ENCODE measurements at regions of chr7 and their contacts with region 1.

Region 1: DNA sequence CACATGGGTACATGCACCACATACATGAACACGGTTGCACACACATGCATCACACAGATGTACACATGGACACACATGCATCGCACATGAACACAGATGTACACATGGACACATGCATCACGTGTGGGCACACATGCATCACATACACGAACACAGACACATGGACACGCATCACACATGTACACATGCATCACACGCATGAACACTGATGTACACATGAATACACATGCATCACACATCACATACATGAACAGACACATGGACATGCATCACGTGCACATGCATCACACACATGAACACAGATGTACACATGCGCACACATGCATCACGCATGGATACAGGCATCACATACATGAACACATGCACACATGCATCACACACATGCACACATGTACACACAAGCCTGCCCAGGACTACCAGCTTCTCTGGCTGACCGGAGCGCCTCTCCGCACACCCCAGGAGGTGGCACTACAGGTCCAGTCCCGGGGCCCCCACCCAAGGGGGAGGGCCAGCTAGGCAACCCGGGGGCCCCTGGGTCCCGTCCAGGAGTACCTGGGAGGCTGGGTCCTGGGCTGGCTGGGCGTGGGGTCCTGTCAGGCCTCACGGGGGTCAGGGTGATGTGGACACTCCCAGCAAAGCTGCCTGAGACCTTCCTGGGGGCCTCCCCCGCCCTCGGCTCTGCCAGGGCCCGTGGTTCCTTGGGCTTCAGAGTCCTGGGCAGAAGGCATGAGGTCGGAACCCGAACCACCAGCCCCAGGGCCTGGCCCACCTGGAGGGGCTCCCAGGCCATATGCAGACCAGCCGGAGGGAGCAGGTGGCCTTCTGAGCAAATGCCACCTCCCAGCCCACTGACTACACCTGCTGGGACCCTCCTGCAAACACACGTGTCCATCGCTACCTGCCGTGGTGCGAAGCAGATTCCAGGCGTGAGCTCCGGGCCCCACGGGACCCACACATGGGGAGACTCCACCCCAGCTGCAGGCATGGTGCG is 19.6 kb downstream of the MICALL2 start:
- DNase-seq: no peak
- H3K4me3 ChIP-seq: no peak overlapping the region
- H3K27ac ChIP-seq: no peak overlapping the region
- H3K4me1 ChIP-seq: no peaks in the 10 kb centered on the region
- H3K27me3 ChIP-seq: no peaks in the 10 kb centered on the region
- CTCF ChIP-seq: no peak
- POLR2A ChIP-seq: no peak

Region 2: GRCh38 chr7:1234881-1235500 is 204.7 kb before region 1 on chr7:
- intact Hi-C with region 1: loop called (anchors 5 kb)
- DNase-seq: no peak
- H3K4me3 ChIP-seq: no peak overlapping the region
- H3K27ac ChIP-seq: no peak overlapping the region
- H3K4me1 ChIP-seq: no peaks in the 10 kb centered on the region
- H3K27me3 ChIP-seq: peaks cover 25 to 92% of the 10 kb centered on the region in 2 donors
- CTCF ChIP-seq: no peak
- POLR2A ChIP-seq: no peak

Region 3: DNA sequence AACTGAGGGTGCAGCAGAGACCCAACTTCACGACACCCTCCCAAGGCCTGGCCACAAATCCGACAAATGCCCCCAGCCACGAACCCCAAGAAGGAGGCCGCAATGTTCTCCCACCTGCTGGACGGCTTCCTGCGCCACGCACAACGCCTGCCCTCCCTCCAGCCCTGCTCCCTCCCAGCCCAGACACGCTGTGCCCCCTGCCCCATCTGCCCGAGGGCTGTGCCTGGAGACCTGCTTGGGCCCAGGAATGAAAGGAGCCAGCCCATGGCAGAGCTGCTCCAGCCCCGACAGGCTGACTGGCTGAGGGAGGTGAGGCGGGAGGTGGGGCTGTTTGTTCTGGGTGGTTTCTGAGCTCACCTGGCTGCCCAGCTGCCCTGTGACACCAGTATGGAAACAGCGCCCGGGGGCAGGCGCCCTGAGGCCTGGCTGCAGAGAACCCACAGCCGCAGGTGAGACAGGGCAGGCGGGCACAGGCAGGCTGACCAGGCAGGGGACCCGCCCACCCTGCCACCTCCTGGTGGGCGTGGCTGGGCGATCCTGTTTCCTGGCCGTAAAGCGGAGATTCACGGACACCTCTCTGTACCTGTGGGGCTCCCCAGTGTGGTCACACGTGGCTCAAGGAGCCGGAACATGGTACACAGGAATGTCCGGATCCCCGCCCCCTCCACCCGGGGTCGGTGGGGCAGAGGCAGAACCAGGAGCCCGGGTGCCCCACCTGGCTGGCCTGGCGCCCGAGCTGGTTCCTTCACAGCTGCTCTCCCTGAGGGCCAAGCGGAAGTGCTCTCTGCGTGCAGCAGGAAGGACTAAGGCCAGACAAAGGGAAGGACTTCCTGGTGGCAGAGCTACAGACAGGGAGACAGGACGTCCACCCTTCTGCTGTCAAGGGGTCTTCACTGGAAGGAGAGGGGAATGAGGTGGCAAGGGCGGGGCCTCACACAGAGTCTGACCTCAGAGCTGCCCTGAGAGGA is 15.6 kb after region 1 on chr7:
- intact Hi-C with region 1: no loop called
- DNase-seq: peak; percentile 86 to 88
- H3K4me3 ChIP-seq: peak overlapping the region in 2 of 3 donors; percentile 47 to 65
- H3K27ac ChIP-seq: peak overlapping the region; percentile 74 to 84
- H3K4me1 ChIP-seq: peaks cover 5 to 9% of the 10 kb centered on the region in 2 donors
- H3K27me3 ChIP-seq: no peaks in the 10 kb centered on the region
- CTCF ChIP-seq: no peak
- POLR2A ChIP-seq: no peak

Region 4: DNA sequence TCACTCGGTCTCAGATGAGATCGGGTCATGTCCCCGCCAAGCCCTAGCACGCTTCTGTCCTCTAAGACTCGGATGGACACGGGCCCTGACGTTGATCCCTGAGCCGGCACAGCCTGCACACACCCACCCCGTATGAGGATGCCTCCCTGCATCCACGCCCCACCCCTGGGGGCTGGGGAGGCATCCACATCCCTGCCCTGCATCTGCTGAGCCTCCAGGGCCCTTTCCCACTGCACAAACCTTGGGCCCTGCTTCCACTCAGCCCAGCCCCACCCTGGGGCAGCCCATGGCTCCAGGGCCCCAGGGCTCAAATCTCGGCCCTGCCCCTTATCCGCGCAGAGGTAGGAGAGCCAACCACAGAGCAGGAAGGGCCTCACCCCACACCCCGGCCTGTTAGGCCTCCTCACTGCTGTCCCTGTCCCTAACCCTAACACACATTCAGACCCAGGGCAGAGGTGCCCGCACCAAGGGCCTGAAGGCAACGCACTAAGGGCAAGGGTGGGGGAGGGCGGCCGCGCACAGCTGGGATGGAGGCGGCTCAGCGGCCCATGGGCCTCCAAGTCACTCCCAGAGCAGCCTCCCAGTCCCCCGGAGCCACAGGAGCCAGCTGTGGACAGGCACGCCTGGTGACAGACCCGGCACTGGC is 29.1 kb after region 1 on chr7:
- intact Hi-C with region 1: loop called (anchors 1 kb)
- DNase-seq: no peak
- H3K4me3 ChIP-seq: no peak overlapping the region
- H3K27ac ChIP-seq: no peak overlapping the region
- H3K4me1 ChIP-seq: no peaks in the 10 kb centered on the region
- H3K27me3 ChIP-seq: no peaks in the 10 kb centered on the region
- CTCF ChIP-seq: no peak
- POLR2A ChIP-seq: no peak

Measured in breast epithelium (tissue), 4 donors.